ENCODE measurements at regions of chr4 and their contacts with region 1.

Region 1: DNA sequence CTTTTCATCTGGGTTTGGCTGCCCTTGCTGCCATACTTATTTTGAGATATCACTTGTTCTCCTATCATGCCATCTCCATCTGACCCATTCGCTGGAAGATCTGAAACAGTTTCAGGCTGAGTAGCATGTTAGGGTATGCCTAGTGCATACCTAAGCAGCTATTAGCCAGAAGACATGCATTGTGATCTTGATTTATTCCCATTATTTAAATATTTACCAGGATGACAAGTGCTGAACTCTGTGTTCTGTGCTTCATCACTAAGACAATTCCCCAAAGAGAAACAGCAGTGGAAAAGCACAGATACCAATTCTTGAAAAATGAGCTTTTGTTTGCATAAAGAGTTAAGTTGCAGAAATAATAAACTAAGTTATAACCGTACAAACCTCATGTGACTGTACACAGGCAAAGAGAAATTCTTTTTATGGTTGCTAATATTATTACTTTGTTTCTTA is 271.0 kb upstream of the ARSJ start:
- DNase-seq: no peak
- H3K4me3 Mint-ChIP-seq: no peak overlapping the region
- H3K27ac Mint-ChIP-seq: no peak overlapping the region
- H3K4me1 Mint-ChIP-seq: no peaks in the 10 kb centered on the region
- H3K27me3 Mint-ChIP-seq: no peaks in the 10 kb centered on the region

Region 2: DNA sequence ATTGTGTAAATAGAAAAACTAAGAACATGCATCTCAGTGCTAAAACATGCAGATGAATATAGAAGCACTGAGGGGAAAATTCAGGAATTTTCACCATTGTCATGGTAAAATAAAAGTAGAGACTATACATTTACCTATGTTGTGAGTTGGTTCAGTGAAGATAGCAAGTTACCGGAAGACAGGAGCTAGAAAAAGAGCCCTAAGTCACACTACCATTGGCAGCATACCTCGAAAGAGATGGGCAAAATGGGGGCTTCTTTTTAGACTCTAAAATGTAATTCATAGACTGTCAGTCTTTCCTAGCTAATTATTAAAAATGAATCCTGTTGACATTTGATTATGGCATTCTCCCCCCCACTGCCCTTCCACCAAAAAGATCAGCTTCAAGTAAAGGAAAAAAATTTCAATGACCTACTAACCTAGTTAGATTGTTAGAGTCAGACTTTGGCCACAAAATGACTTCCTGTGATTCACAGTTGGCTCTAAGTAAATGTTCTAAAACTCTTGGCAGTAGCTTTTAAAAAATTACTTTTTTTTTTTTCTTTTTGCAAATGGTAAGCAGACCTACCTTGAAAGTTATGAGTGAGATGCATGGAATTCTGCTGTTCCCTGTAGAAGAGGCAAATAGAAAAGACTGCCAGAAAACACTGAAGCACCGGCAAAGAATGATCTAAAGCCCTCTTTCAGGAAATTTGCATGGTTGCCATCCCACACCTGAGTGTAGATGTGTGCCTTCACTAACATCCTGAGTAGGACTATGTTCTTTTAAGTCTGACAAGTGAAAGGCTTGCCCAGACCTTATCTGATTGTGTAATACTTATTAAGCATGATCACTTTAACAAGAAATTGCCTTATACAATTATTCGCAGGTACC is 244.7 kb before region 1 on chr4:
- intact Hi-C with region 1: no loop called
- DNase-seq: no peak
- H3K4me3 Mint-ChIP-seq: no peak overlapping the region
- H3K27ac Mint-ChIP-seq: no peak overlapping the region
- H3K4me1 Mint-ChIP-seq: no peaks in the 10 kb centered on the region
- H3K27me3 Mint-ChIP-seq: peaks cover 6% of the 10 kb centered on the region

Region 3: DNA sequence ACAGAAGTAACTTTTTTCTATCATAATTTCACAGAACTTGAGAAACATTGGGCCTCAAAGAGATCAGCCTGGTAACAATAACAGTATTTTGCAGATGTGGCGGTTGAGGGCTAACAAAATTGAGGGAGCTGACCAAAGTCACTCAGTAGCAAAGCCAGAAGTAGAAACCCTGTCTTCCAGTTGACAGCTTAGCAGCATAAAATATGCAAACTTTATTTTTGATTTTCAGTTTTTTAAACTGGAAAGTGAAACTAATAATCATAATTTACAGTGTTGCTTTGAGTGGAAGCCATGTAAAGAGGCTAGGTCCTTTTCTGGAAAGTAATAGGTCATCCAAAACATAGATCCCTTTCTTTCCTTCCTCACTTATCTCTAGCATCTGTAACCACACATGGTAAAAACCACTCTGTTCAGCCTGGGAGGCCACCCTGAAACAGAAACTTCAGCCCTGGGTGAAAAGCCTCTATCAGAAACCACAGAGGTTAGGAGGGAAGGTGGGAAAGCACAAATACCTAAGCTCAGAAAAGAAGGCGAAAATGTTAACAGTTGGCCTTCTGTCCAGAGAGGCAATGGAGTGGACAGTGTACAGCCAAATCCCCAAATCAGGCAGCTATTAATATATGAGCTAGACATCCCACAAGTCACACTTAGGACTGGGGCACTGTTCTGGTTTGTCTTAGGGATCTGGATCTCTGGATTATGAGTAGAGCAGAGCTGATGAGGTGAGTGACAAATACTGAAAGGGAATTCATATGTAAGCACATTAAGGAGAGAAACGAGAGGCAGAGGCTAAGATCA is 209.9 kb before region 1 on chr4:
- intact Hi-C with region 1: no loop called
- DNase-seq: no peak
- H3K4me3 Mint-ChIP-seq: no peak overlapping the region
- H3K27ac Mint-ChIP-seq: no peak overlapping the region
- H3K4me1 Mint-ChIP-seq: peaks cover 4% of the 10 kb centered on the region
- H3K27me3 Mint-ChIP-seq: no peaks in the 10 kb centered on the region

Region 4: GRCh38 chr4:114263233-114263632 is 12.8 kb after region 1 on chr4:
- intact Hi-C with region 1: loop called (anchors 1 kb)
- DNase-seq: no peak
- H3K4me3 Mint-ChIP-seq: no peak overlapping the region
- H3K27ac Mint-ChIP-seq: no peak overlapping the region
- H3K4me1 Mint-ChIP-seq: no peaks in the 10 kb centered on the region
- H3K27me3 Mint-ChIP-seq: no peaks in the 10 kb centered on the region

Region 5: DNA sequence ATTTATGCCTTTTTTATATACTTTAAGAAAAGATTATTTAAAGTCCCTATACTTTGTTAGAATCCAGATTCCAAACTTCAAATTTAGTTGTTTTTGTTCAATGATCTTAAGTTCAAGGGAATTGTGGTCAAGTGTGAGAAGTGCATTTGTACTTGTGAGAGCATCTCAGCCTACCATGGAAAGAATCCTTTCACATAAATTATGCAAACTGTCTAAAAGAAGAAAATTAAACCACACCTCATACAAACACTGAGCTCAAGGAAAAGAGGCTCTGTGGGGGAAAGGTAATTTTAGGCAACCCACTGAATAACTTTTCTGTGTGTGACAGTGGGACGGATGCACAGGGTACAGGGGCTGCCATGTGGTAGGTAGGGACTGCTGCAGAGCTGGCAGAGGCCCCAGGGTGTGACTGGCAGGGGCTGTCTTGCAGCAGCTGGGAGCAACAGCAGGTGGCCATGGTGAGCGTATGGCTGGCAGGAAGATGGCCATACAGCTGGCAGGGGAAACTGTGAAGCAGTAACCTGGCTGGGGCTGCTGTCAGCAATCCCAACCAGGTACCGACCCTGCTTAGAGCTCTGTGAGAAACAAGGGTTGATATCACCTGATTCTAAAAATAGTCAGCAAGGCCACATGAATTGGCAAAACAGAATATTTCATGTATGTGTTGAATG is 478.7 kb after region 1 on chr4:
- intact Hi-C with region 1: no loop called
- DNase-seq: no peak
- H3K4me3 Mint-ChIP-seq: no peak overlapping the region
- H3K27ac Mint-ChIP-seq: no peak overlapping the region
- H3K4me1 Mint-ChIP-seq: no peaks in the 10 kb centered on the region
- H3K27me3 Mint-ChIP-seq: no peaks in the 10 kb centered on the region

Measured in activated CD4-positive, alpha-beta T cell treated with anti-CD3 and anti-CD28 coated beads, Interleukin-2, amount 10 ng/mL, durations not matched to agents 24 days and 14 days (primary cell).